Activated CD4-positive, alpha-beta memory T cell treated with anti-CD3 and anti-CD28 coated beads for 36 hours (primary cell): ENCODE measurements at regions of chr13 and their contacts with region 1.

Region 1: DNA sequence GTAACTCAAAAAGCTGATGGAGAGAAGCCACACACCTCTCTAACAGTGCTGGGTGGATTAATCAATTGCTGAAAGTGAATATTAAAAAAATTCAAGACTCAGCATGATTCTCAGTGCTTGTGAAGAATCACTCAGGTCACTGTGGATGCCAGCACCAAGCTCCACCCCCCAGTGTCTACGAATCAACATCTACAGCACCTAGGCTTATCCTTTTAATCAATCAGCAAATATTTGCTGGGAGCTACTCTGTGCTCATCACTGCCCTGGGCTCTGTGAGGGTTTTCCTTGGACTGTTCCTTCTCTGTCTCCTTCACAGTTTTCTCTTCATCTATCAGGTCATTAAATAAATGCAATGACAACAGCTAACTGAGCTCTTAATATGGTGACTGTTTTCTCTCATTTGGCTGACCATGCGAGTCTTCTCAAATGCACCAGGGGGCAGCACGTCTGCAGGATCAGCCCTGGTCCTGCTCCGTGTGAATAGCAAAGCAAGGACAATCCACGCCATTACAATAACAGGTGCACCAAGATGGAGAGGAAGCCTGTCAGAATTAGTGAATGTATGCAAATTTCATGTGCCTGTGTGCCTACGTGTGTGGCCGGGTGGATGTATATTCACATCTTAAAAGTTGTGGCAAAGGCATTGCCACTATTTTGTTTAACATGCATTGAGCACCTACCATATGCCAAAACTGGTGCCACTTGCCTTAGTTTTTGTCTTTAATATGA is 14.6 kb upstream of the C13orf42 start:
- DNase-seq: peak; percentile 60
- H3K4me3 Mint-ChIP-seq: no peak overlapping the region
- H3K27ac Mint-ChIP-seq: no peak overlapping the region
- H3K4me1 Mint-ChIP-seq: peaks cover 16% of the 10 kb centered on the region
- H3K27me3 Mint-ChIP-seq: peaks cover 15% of the 10 kb centered on the region

Region 2: GRCh38 chr13:51058461-51059167 is 67.0 kb before region 1 on chr13:
- CTCF ChIA-PET with region 1: no interaction called
- POLR2A ChIA-PET with region 1: no interaction called
- intact Hi-C with region 1: no loop called
- DNase-seq: no peak
- H3K4me3 Mint-ChIP-seq: no peak overlapping the region
- H3K27ac Mint-ChIP-seq: no peak overlapping the region
- H3K4me1 Mint-ChIP-seq: no peaks in the 10 kb centered on the region
- H3K27me3 Mint-ChIP-seq: peaks cover 2% of the 10 kb centered on the region

Region 3: GRCh38 chr13:51105046-51105445 is 20.6 kb before region 1 on chr13:
- CTCF ChIA-PET with region 1: interaction called, 11 read pairs
- POLR2A ChIA-PET with region 1: no interaction called
- intact Hi-C with region 1: no loop called
- DNase-seq: no peak
- H3K4me3 Mint-ChIP-seq: no peak overlapping the region
- H3K27ac Mint-ChIP-seq: no peak overlapping the region
- H3K4me1 Mint-ChIP-seq: no peaks in the 10 kb centered on the region
- H3K27me3 Mint-ChIP-seq: peaks cover 7% of the 10 kb centered on the region